ENCODE measurements at regions of chr19 and their contacts with region 1.

Region 1: DNA sequence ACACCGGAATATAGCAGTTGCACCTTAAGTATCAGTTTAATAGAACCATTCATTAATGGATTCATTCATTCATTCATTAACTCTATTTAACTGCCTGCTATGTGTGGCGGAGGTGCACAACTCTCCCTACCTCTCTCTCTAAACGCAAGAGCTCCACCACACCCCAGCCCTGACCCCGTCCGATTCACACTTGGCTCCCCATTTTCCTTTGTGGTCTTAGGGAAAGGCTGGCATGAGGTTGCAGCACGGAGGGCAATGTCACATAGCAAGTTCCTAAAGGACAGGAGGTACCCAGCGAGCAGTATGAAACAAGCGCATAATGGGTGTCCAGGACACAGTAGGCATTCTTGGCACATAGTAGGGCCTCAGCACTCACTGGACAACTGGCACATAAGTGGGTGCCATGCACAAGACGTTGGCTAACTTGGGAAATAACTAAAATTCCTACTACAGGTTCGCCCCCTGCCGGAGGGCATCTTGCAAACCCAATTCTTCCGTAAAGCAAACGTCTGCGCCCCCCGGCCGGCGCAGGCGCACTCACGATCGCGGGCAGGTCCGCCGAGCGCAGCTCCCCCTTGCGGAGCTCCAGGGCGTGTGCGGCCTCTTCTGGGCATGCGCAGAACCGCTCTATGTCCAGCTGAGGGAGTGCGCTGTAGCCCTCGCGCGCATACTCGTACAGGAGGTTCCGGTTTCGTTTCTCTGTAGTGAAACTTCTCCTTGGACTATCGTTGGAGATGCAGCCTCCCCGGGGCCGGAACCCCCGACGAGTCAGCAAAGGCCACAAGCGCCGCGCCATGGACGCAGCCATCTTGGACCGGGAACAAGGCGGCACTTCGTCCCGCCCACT is at the start of gene SARS2:
- DNase-seq: peak; percentile 93
- ATAC-seq: peak; percentile 71
- H3K4me3 Mint-ChIP-seq: peak within 1 kb of the TSS; percentile 97
- H3K27ac Mint-ChIP-seq: peak within 1 kb of the TSS; percentile 98
- H3K4me1 Mint-ChIP-seq: peaks cover 34% of the 10 kb centered on the region
- H3K27me3 Mint-ChIP-seq: no peaks in the 10 kb centered on the region
- CTCF ChIP-seq: peak; percentile 100
- total RNA-seq, gene SARS2: 46.4 and 50.9 TPM in 2 replicates

Region 2: GRCh38 chr19:38224014-38224862 is 705.9 kb before region 1 on chr19 and contains the start of gene DPF1:
- CTCF ChIA-PET with region 1: no interaction called
- POLR2A ChIA-PET with region 1: no interaction called
- intact Hi-C with region 1: loop called (anchors 10 kb)
- DNase-seq: peak; percentile 64
- ATAC-seq: peak; percentile 88
- H3K4me3 Mint-ChIP-seq: peak within 1 kb of the TSS; percentile 85
- H3K27ac Mint-ChIP-seq: peak within 1 kb of the TSS; percentile 66
- H3K4me1 Mint-ChIP-seq: peaks cover 35% of the 10 kb centered on the region
- H3K27me3 Mint-ChIP-seq: peaks cover 52% of the 10 kb centered on the region
- CTCF ChIP-seq: no peak
- total RNA-seq, gene DPF1: not detected in 2 replicates

Region 3: GRCh38 chr19:38514812-38515633 is 415.1 kb before region 1 on chr19:
- CTCF ChIA-PET with region 1: interaction called, 5 read pairs
- POLR2A ChIA-PET with region 1: no interaction called
- intact Hi-C with region 1: loop called (anchors 1 kb)
- DNase-seq: peak; percentile 70
- ATAC-seq: peak; percentile 97
- H3K4me3 Mint-ChIP-seq: no peak overlapping the region
- H3K27ac Mint-ChIP-seq: no peak overlapping the region
- H3K4me1 Mint-ChIP-seq: peaks cover 5% of the 10 kb centered on the region
- H3K27me3 Mint-ChIP-seq: peaks cover 12% of the 10 kb centered on the region
- CTCF ChIP-seq: no peak

Region 4: DNA sequence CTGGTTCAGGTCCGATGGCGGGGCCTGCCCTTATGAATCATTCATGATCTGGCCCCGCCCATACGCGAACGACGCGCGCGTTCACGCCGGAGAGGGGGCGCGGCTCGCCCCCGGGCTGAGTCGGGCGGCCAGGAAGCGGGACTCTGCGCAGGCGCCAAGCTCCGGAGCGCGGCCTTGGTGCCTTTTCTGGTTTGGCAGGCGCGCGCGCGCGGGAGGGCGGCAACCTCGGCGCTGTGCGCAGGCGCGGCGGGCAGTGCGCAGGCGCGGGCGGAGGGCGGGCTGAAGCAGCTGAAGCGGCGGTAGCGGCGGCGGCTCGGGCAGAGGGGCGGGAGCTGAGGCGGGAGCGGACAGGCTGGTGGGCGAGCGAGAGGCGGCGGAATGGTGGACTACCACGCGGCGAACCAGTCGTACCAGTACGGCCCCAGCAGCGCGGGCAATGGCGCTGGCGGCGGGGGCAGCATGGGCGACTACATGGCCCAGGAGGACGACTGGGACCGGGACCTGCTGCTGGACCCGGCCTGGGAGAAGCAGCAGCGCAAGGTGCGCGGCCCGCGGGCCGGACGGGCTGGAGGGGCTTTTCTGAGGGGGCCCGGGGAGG is 282.7 kb before region 1 on chr19 and contains the start of gene ACTN4:
- CTCF ChIA-PET with region 1: interaction called, 3 read pairs
- POLR2A ChIA-PET with region 1: interaction called, 8 read pairs
- intact Hi-C with region 1: loop called (anchors 1 kb)
- DNase-seq: peak; percentile 100
- ATAC-seq: peak; percentile 91
- H3K4me3 Mint-ChIP-seq: peak within 1 kb of the TSS; percentile 95
- H3K27ac Mint-ChIP-seq: peak within 1 kb of the TSS; percentile 82
- H3K4me1 Mint-ChIP-seq: peaks cover 42% of the 10 kb centered on the region
- H3K27me3 Mint-ChIP-seq: no peaks in the 10 kb centered on the region
- CTCF ChIP-seq: no peak
- total RNA-seq, gene ACTN4: 197 and 198 TPM in 2 replicates

Region 5: GRCh38 chr19:38831142-38831605 is 99.0 kb before region 1 on chr19:
- CTCF ChIA-PET with region 1: interaction called, 5 read pairs
- POLR2A ChIA-PET with region 1: interaction called, 3 read pairs
- intact Hi-C with region 1: loop called (anchors 1 kb)
- DNase-seq: no peak
- ATAC-seq: peak; percentile 42
- H3K4me3 Mint-ChIP-seq: peak overlapping the region; percentile 94
- H3K27ac Mint-ChIP-seq: peak overlapping the region; percentile 95
- H3K4me1 Mint-ChIP-seq: peaks cover 31% of the 10 kb centered on the region
- H3K27me3 Mint-ChIP-seq: no peaks in the 10 kb centered on the region
- CTCF ChIP-seq: no peak

Region 6: GRCh38 chr19:38891771-38892170 is 38.4 kb before region 1 on chr19:
- CTCF ChIA-PET with region 1: interaction called, 10 read pairs
- POLR2A ChIA-PET with region 1: interaction called, 4 read pairs
- intact Hi-C with region 1: no loop called
- DNase-seq: no peak
- ATAC-seq: no peak
- H3K4me3 Mint-ChIP-seq: no peak overlapping the region
- H3K27ac Mint-ChIP-seq: no peak overlapping the region
- H3K4me1 Mint-ChIP-seq: peaks cover 1% of the 10 kb centered on the region
- H3K27me3 Mint-ChIP-seq: no peaks in the 10 kb centered on the region
- CTCF ChIP-seq: no peak